ENCODE measurements at regions of chr6 and their contacts with region 1.

Region 1: DNA sequence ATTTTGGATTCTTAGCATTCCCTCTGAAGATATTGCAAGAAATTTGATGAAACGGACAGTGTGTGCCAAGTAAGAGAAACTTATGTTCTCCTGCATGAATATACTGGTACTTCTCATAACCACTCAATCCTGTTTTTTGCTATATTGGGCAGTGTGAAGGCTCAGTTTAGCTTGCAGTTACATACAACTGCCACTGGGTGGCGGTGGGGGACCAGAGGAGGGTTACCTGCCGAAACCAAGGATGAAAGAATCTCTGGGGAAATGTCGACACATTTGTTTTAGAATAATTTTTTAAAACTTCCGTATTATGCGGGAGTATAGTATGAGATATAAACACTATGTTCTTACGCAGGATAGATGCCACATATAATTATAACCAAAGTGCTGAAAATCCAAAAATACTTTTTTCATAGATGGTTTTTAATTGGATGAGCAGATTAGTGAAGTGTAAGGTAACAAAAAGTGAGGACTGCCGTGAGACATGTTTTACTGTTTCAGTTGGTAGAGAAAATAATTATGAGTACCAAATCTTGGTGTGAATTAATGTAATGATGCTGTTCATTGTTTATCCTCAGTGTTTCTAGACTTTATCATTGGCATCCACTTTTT is 9.7 kb downstream of the TRMT11 start:
- H3K4me3 Mint-ChIP-seq: no peak overlapping the region
- H3K27ac Mint-ChIP-seq: no peak overlapping the region
- H3K4me1 Mint-ChIP-seq: no peaks in the 10 kb centered on the region
- H3K27me3 Mint-ChIP-seq: no peaks in the 10 kb centered on the region

Region 2: DNA sequence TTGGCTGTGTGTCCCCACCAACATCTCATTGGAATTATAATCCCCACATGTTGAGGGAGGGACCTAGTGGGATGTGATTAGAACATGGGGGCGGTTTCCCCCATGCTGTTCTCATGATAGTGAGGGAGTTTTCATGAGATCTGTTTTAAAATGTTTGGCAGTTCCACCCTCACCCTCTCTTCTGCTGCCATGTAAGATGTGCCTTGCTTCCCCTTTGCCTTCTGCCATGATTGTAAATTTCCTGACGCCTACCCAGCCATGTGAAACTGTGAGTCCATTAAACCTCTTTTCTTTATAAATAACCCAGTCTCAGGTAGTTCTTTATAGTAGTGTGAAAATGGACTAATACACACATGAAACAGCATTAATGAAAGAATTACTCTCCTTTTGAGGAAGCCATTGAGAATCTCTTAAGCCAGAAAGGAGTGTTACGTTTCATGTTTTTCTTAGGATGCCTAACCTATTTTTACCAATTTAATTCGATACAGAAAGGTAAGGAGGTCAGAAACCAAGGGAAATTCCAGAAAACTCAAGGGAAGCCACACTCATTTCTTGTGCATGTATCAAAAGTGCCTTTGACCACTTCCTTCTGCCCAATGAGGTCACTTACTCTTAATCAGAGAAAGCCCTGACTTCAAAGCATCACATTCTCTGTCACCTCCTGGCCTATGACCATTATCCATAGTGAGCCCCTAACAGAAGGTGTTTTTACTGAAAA is 64.2 kb before region 1 on chr6:
- intact Hi-C with region 1: no loop called
- H3K4me3 Mint-ChIP-seq: no peak overlapping the region
- H3K27ac Mint-ChIP-seq: no peak overlapping the region
- H3K4me1 Mint-ChIP-seq: peaks cover 8% of the 10 kb centered on the region
- H3K27me3 Mint-ChIP-seq: no peaks in the 10 kb centered on the region

Region 3: DNA sequence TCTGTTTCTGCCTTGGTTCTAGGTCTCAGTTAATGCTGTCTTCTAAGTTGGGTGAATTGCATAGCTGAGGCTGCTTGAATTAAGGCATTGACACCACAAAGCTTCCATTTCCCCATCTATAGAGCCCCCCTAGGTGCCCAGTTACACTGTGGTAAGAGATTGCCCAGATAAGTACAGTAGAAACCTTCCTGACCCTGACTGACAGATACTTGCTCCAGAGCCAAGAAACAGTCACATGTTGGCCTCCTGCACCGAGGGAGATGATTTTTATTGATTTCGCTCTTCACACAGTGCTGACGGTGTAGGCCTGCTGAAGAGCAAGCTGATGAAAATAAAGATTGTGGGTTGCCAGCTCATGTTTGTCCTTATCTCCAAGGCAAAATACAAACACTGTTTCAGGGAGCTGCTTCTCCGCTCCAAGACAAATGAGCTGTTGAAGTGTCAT is 58.2 kb after region 1 on chr6:
- intact Hi-C with region 1: no loop called
- H3K4me3 Mint-ChIP-seq: no peak overlapping the region
- H3K27ac Mint-ChIP-seq: no peak overlapping the region
- H3K4me1 Mint-ChIP-seq: no peaks in the 10 kb centered on the region
- H3K27me3 Mint-ChIP-seq: no peaks in the 10 kb centered on the region

Region 4: GRCh38 chr6:126170978-126171382 is 174.9 kb after region 1 on chr6:
- intact Hi-C with region 1: loop called (anchors 1 kb)
- H3K4me3 Mint-ChIP-seq: peak overlapping the region; percentile 44
- H3K27ac Mint-ChIP-seq: no peak overlapping the region
- H3K4me1 Mint-ChIP-seq: peaks cover 6% of the 10 kb centered on the region
- H3K27me3 Mint-ChIP-seq: no peaks in the 10 kb centered on the region

Region 5: DNA sequence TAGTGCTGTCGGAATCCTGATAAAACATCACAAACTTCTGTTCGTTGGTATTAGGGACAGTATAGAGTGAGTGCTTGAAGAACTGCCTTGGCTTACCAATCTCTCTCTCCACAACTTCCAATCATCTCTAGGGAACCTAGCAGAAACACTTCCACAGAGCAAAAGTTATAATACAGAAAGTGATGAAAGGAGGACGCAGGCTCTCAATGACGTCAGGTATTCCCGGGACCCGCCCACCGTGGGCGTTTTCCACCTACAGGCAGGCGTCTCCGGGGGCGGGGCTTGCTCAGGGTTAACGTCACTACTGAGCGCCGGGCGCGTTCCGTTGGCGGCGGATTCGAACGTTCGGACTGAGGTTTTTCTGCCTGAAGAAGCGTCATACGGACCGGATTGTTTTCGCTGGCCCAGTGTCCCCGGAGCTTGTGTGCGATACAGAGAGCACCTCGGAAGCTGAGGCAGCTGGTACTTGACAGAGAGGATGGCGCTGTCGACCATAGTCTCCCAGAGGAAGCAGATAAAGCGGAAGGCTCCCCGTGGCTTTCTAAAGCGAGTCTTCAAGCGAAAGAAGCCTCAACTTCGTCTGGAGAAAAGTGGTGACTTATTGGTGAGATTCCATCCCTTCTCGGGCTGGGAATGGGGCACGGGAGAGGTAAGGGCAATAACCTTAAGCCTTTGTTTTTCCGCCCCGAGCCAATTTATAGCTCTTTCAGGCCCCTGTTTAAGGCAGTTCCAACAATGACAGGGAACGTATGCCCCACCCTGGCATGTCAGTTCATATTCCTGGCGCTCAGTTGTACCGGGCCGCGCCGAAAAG is 343.9 kb after region 1 on chr6 and contains the start of gene CENPW:
- intact Hi-C with region 1: loop called (anchors 10 kb)
- H3K4me3 Mint-ChIP-seq: no peak within 1 kb of the TSS
- H3K27ac Mint-ChIP-seq: no peak within 1 kb of the TSS
- H3K4me1 Mint-ChIP-seq: peaks cover 29% of the 10 kb centered on the region
- H3K27me3 Mint-ChIP-seq: no peaks in the 10 kb centered on the region

Region 6: GRCh38 chr6:127120787-127121636 is 1124.9 kb after region 1 on chr6:
- intact Hi-C with region 1: loop called (anchors 1 kb)
- H3K4me3 Mint-ChIP-seq: no peak overlapping the region
- H3K27ac Mint-ChIP-seq: no peak overlapping the region
- H3K4me1 Mint-ChIP-seq: peaks cover 30% of the 10 kb centered on the region
- H3K27me3 Mint-ChIP-seq: peaks cover 61% of the 10 kb centered on the region